ENCODE measurements at regions of chr9 and their contacts with region 1.

Region 1: GRCh38 chr9:124852829-124853531 is at the start of gene WDR38:
- DNase-seq: no peak
- ATAC-seq: peak; percentile 91
- H3K4me3 ChIP-seq: peak within 1 kb of the TSS; percentile 51; the same call in 1 of the 2 replicates
- H3K27ac ChIP-seq: no peak within 1 kb of the TSS
- H3K4me1 ChIP-seq: peaks cover 5% of the 10 kb centered on the region
- H3K27me3 ChIP-seq: no peaks in the 10 kb centered on the region
- CTCF ChIP-seq: peak; percentile 82 to 98 (median 87)
- EP300 ChIP-seq: no peak
- POLR2A ChIP-seq: no peak
- RAD21 ChIP-seq: peak; percentile 79
- polyA plus RNA-seq, gene WDR38: not detected

Region 2: GRCh38 chr9:124513376-124513994 is 339.5 kb before region 1 on chr9:
- CTCF ChIA-PET with region 1: no interaction called
- POLR2A ChIA-PET with region 1: no interaction called
- RAD21 ChIA-PET with region 1: no interaction called
- SMC1A ChIA-PET with region 1: no interaction called
- in situ Hi-C with region 1: no loop called
- intact Hi-C with region 1: no loop called
- DNase-seq: no peak
- ATAC-seq: peak; percentile 16
- H3K4me3 ChIP-seq: no peak overlapping the region
- H3K27ac ChIP-seq: no peak overlapping the region
- H3K4me1 ChIP-seq: no peaks in the 10 kb centered on the region
- H3K27me3 ChIP-seq: no peaks in the 10 kb centered on the region
- CTCF ChIP-seq: no peak
- EP300 ChIP-seq: no peak
- POLR2A ChIP-seq: no peak
- RAD21 ChIP-seq: no peak

Region 3: DNA sequence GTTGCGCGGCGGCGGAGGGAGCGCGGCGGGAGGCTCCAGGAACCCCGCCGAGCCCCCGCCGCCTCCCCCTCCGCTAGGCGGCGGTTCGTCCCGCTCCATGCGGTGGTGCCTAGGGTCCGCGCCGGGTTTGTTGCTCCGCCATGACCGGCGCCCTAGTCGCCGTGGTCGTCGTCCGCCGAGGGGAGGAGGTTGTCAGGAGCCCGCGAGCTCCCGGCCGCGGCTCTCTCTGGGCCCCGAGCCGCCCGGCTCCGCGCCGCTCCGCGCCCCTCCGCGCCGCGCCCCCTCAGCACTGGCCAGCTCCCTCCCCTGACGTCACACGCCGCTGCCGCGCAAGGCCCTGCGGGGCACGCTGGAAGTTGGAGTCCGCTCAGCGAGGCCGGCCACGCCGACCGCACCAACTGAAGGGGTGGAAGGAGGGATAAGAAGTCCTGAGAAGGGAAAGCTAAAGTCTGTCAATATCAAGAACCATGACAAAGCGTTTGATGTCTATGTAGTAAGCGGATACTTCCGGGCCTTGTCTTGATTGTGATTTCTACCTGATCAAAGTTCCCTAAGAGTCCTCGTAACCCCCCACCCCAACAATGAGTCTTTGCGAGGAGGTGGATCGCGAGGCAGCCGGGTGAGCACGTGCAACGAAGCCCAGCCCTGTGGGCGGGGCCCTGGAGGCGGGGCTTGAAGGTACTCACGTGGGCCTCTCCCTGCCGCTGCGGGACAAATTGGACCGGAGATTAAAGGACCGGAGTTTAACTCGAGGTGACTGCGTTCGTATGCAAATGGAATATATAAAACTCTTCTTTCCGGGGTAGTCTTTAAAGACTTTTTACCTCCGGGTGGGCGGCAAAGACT is 81.7 kb before region 1 on chr9 and contains the start of gene NR6A1:
- CTCF ChIA-PET with region 1: interaction called, 575 read pairs
- POLR2A ChIA-PET with region 1: interaction called, 8 read pairs
- RAD21 ChIA-PET with region 1: interaction called, 180 read pairs
- SMC1A ChIA-PET with region 1: interaction called, 233 read pairs
- in situ Hi-C with region 1: loop called (anchors 5 kb)
- intact Hi-C with region 1: loop called (anchors 1 kb)
- DNase-seq: peak; percentile 92
- ATAC-seq: peak; percentile 88
- H3K4me3 ChIP-seq: peak within 1 kb of the TSS; percentile 97
- H3K27ac ChIP-seq: peak within 1 kb of the TSS; percentile 86
- H3K4me1 ChIP-seq: peaks cover 21% of the 10 kb centered on the region
- H3K27me3 ChIP-seq: no peaks in the 10 kb centered on the region
- CTCF ChIP-seq: peak in 2 of 3 experiments; percentile 19 to 22; a peak in 3 of 6 replicates
- EP300 ChIP-seq: no peak
- POLR2A ChIP-seq: peak; percentile 64
- RAD21 ChIP-seq: no peak
- polyA plus RNA-seq, gene NR6A1: 1.2 to 2.5 TPM

Region 4: GRCh38 chr9:124794902-124795491 is 58.0 kb before region 1 on chr9:
- CTCF ChIA-PET with region 1: interaction called, 27 read pairs
- POLR2A ChIA-PET with region 1: no interaction called
- RAD21 ChIA-PET with region 1: interaction called, 5 read pairs
- SMC1A ChIA-PET with region 1: interaction called, 4 read pairs
- in situ Hi-C with region 1: no loop called
- intact Hi-C with region 1: no loop called
- DNase-seq: no peak
- ATAC-seq: peak; percentile 58
- H3K4me3 ChIP-seq: no peak overlapping the region
- H3K27ac ChIP-seq: no peak overlapping the region
- H3K4me1 ChIP-seq: no peaks in the 10 kb centered on the region
- H3K27me3 ChIP-seq: no peaks in the 10 kb centered on the region; a peak in 1 of 4 replicates
- CTCF ChIP-seq: peak in 1 of 3 experiments; percentile 5; a peak in 1 of 6 replicates
- EP300 ChIP-seq: no peak
- POLR2A ChIP-seq: no peak
- RAD21 ChIP-seq: no peak

Region 5: DNA sequence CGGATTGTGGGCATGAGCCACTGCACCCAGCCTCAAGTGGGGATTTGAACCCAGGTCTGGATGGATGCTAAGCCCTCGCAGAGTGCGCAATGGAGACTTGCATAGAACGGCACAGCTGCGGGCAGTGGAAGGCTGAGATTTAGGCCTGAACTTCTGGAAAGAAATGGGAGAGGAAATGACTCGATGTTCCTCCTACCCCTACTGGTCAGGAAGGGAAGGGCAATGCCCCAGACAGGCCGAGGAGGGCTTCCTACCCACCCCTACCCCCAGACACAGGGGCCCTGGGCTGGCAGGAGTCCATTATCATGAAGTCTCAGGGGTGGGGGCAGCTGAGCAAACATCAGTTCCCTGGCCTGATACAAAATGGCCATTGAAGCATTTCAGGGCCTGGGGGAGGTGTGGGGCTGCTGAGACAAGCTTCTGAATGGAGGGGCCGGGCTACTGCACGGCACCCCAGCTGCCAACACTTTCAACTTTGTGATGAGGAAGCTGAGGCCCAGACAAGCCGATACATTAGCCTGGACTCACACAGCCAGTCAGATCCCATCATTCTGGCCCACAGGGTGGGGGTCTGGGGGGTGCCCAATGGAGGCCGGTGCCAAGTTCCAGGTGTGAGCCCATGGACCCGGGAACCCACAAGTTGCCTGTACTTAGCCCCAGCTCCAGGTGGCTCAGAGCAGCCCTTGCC is 13.2 kb before region 1 on chr9:
- CTCF ChIA-PET with region 1: interaction called, 49 read pairs
- POLR2A ChIA-PET with region 1: interaction called, 3 read pairs
- RAD21 ChIA-PET with region 1: interaction called, 6 read pairs
- SMC1A ChIA-PET with region 1: interaction called, 5 read pairs
- in situ Hi-C with region 1: no loop called
- intact Hi-C with region 1: no loop called
- DNase-seq: no peak
- ATAC-seq: peak; percentile 76
- H3K4me3 ChIP-seq: no peak overlapping the region
- H3K27ac ChIP-seq: no peak overlapping the region
- H3K4me1 ChIP-seq: no peaks in the 10 kb centered on the region
- H3K27me3 ChIP-seq: no peaks in the 10 kb centered on the region
- CTCF ChIP-seq: peak in 2 of 3 experiments; percentile 35 to 51; a peak in 5 of 6 replicates
- EP300 ChIP-seq: no peak
- POLR2A ChIP-seq: no peak
- RAD21 ChIP-seq: no peak

Region 6: DNA sequence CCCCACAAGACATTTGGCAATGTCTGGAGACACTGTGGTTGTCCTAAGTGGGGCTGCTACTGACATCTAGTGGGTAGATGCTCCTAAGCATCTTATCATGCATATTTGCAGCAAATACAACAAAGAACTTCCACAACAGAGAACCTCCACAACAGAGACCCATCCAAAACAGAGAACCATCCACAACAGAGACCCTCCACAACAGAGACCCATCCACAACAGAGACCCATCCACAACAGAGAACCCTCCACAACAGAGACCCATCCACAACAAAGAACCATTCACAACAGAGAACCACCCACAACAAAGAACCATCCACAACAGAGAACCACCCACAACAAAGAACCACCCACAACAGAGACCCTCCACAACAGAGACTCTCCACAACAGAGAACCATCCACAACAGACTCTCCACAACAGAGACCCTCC is 41.8 kb after region 1 on chr9:
- CTCF ChIA-PET with region 1: interaction called, 45 read pairs
- POLR2A ChIA-PET with region 1: no interaction called
- RAD21 ChIA-PET with region 1: no interaction called
- SMC1A ChIA-PET with region 1: interaction called, 8 read pairs
- in situ Hi-C with region 1: no loop called
- intact Hi-C with region 1: loop called (anchors 1 kb)
- DNase-seq: no peak
- ATAC-seq: peak; percentile 91
- H3K4me3 ChIP-seq: no peak overlapping the region
- H3K27ac ChIP-seq: no peak overlapping the region
- H3K4me1 ChIP-seq: no peaks in the 10 kb centered on the region
- H3K27me3 ChIP-seq: no peaks in the 10 kb centered on the region
- CTCF ChIP-seq: peak; percentile 57 to 71 (median 58); a peak in 5 of 6 replicates
- EP300 ChIP-seq: no peak
- POLR2A ChIP-seq: no peak
- RAD21 ChIP-seq: peak; percentile 78

Region 7: DNA sequence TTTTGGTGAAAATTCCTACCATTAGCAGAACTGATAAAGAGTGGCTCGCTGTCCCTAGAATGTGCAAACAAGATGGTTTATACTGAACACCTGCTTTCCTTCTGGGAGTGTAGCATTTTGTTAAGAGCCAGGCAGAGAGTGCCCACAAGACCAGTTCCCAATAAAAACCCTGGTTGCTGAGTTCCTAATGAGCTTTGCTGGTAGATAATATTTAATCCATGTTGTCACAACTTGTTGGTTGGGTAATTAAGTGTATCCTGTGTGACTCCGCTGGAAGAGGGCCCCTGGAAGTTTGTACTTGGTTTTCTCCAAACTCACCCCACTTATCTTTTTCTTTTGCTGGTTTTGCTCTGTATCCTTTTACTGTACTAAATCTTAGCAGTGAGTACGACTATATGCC is 127.4 kb after region 1 on chr9:
- CTCF ChIA-PET with region 1: no interaction called
- POLR2A ChIA-PET with region 1: no interaction called
- RAD21 ChIA-PET with region 1: no interaction called
- SMC1A ChIA-PET with region 1: no interaction called
- in situ Hi-C with region 1: no loop called
- intact Hi-C with region 1: no loop called
- DNase-seq: no peak
- ATAC-seq: no peak
- H3K4me3 ChIP-seq: no peak overlapping the region
- H3K27ac ChIP-seq: no peak overlapping the region
- H3K4me1 ChIP-seq: no peaks in the 10 kb centered on the region
- H3K27me3 ChIP-seq: no peaks in the 10 kb centered on the region
- CTCF ChIP-seq: no peak
- EP300 ChIP-seq: no peak
- POLR2A ChIP-seq: no peak
- RAD21 ChIP-seq: no peak